ENCODE measurements at regions of chr1 and their contacts with region 1.

Region 1: DNA sequence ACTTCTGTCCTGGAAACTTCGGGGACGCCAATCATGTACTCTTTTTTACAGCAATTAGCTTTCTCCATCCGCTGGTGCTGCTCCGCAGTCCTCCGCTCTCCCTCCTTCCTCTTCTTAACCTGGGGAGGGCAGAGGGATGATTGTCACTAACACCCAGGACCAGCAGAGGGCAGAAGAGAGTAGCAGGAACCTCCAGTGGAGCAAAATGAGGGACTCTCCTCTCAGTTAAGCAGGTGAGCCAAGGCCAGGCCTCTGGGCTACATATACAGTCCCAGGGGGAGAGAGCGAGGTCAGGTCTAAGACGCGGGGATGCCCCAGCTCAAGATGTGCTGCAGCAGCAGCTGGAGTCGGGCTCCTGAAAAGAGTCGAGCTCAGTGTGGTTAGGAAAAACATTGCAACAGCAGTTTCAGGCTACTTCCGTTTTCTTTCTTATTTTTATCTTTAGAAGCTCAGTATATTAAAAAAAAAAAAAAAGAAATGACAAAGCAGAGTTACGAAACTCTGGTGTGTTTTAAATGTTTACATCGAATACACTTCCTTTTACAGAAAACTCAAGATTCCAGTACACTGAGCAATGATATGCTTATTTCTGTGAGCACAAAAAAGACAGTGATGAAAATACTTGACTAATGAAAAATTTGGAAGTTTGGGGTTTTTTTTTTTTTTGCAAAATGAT is 25.7 kb upstream of the NLRP3 start:
- DNase-seq: peak; percentile 75
- ATAC-seq: peak; percentile 99
- H3K4me3 Mint-ChIP-seq: peak overlapping the region; percentile 60
- H3K27ac Mint-ChIP-seq: peak overlapping the region; percentile 75
- H3K4me1 Mint-ChIP-seq: peaks cover 22% of the 10 kb centered on the region
- H3K27me3 Mint-ChIP-seq: no peaks in the 10 kb centered on the region
- CTCF ChIP-seq: no peak

Region 2: DNA sequence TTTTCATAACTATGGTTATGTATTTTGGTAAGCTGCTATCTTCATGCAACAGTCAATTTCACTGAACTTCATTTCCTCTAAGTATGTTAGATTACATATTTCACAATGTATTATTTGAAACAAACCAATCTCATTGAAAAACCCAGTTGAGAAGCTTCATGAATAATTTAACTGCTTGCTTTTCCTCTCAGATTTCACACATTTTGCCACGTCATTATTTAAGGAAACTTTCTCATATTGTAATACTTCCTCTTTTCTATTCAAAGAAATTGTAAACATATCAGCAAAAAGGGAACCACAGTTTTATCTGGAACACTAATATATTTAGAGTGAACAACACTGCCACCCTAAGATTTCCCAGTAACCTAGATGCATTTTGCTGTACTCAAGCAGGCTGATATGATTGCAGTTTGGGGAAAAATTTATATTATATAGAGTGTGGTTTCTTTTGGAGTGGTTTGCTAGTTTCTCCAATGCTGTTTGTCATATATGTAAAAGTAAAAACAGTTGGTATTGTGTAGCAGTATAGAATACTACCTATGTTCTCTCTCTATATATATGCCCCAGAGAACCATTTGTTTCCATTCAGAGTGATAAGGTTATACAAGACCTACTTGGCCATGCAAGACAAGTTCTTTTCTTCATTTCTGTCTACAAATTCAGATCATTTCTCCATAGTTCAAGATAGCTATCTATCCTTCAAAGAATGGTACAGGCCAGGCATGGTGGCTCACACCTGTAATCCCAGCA is 430.1 kb before region 1 on chr1:
- CTCF ChIA-PET with region 1: no interaction called
- POLR2A ChIA-PET with region 1: interaction called, 4 read pairs
- intact Hi-C with region 1: loop called (anchors 2 kb)
- DNase-seq: no peak
- ATAC-seq: peak; percentile 56
- H3K4me3 Mint-ChIP-seq: peak overlapping the region; percentile 50
- H3K27ac Mint-ChIP-seq: peak overlapping the region; percentile 62
- H3K4me1 Mint-ChIP-seq: peaks cover 36% of the 10 kb centered on the region
- H3K27me3 Mint-ChIP-seq: no peaks in the 10 kb centered on the region
- CTCF ChIP-seq: no peak

Region 3: GRCh38 chr1:247373721-247374141 is 16.5 kb before region 1 on chr1:
- CTCF ChIA-PET with region 1: interaction called, 52 read pairs
- POLR2A ChIA-PET with region 1: interaction called, 5 read pairs
- intact Hi-C with region 1: loop called (anchors 1 kb)
- DNase-seq: peak; percentile 52
- ATAC-seq: peak; percentile 87
- H3K4me3 Mint-ChIP-seq: peak overlapping the region; percentile 32
- H3K27ac Mint-ChIP-seq: no peak overlapping the region
- H3K4me1 Mint-ChIP-seq: peaks cover 7% of the 10 kb centered on the region
- H3K27me3 Mint-ChIP-seq: peaks cover 11% of the 10 kb centered on the region
- CTCF ChIP-seq: no peak

Region 4: GRCh38 chr1:247440001-247440620 is 49.9 kb after region 1 on chr1:
- CTCF ChIA-PET with region 1: interaction called, 27 read pairs
- POLR2A ChIA-PET with region 1: interaction called, 36 read pairs
- intact Hi-C with region 1: loop called (anchors 1 kb)
- DNase-seq: peak; percentile 26
- ATAC-seq: peak; percentile 96
- H3K4me3 Mint-ChIP-seq: peak overlapping the region; percentile 52
- H3K27ac Mint-ChIP-seq: peak overlapping the region; percentile 74
- H3K4me1 Mint-ChIP-seq: peaks cover 63% of the 10 kb centered on the region
- H3K27me3 Mint-ChIP-seq: no peaks in the 10 kb centered on the region
- CTCF ChIP-seq: no peak

Region 5: DNA sequence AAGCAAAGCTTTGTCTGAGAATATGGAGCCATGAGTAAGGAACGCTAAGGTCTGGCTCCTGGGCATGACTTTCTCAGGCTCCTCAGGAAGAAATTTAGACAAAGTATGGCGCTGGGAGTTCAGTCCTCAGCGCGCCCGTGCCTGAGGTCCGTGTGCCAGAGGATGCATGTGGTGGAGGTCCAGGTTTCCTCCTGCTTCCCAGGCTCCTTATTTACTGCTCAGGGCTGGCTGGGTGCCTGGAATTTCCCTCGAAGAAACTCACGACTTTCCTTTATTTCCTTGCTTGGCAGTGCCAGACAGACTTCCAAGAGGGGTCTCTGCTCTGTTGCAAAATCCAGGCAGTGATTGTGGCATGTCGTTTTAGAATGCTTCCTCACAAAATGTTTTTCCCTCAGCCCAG is 171.9 kb after region 1 on chr1:
- CTCF ChIA-PET with region 1: no interaction called
- POLR2A ChIA-PET with region 1: no interaction called
- intact Hi-C with region 1: no loop called
- DNase-seq: no peak
- ATAC-seq: no peak
- H3K4me3 Mint-ChIP-seq: no peak overlapping the region
- H3K27ac Mint-ChIP-seq: no peak overlapping the region
- H3K4me1 Mint-ChIP-seq: no peaks in the 10 kb centered on the region
- H3K27me3 Mint-ChIP-seq: no peaks in the 10 kb centered on the region
- CTCF ChIP-seq: no peak

Region 6: GRCh38 chr1:247576495-247576894 is 186.2 kb after region 1 on chr1:
- CTCF ChIA-PET with region 1: interaction called, 7 read pairs
- POLR2A ChIA-PET with region 1: no interaction called
- intact Hi-C with region 1: loop called (anchors 1 kb)
- DNase-seq: no peak
- ATAC-seq: no peak
- H3K4me3 Mint-ChIP-seq: no peak overlapping the region
- H3K27ac Mint-ChIP-seq: no peak overlapping the region
- H3K4me1 Mint-ChIP-seq: no peaks in the 10 kb centered on the region
- H3K27me3 Mint-ChIP-seq: peaks cover 14% of the 10 kb centered on the region
- CTCF ChIP-seq: no peak